PC-3 (cell line): ENCODE measurements at regions of chr11 and their contacts with region 1.

Region 1: DNA sequence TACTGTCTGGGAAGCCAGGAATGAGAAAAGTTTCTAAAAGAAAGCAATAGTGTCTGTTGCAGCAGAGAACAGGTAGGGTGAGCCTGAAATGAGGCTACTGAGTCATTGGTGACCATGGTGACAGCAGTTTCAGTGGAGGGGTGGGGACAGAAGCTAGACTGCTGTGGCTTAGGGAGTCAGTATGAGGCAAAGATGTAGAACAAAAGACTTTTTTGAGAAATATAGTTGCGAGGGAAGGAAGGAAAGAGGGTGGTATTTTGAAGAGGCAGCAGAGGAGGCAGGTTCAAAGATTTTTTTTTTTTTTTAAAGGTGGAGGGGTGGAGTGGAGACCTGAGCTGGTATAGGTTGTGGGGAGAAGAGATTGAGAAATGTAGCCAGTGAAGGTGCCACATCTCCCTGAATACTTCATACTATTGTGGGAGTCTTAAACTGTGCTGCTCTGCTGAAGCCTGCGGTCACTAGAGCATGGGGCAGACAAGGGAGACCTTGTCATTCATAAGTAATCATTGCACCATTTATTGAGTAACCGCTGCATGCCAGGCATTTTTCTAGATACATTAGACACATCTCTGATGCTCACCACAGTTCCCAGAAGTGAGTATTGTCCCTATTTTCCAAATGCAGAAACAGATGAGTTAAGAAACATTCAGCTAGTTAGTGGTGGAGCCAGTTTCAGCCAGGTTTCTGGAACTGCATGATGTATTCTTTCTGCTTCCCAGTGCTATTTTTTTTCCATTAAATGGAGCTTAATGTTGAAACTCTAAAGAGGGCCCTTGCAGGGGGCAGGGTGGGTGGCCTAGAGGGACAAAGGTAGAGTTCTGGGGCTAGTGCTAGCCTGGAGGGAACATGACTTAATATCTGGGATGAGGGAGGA is 49.9 kb downstream of the STIM1 start:
- DNase-seq: peak; percentile 91
- ATAC-seq: peak; percentile 91
- H3K4me3 ChIP-seq: peak overlapping the region; percentile 59
- H3K27ac ChIP-seq: peak overlapping the region; percentile 89
- H3K4me1 ChIP-seq: peaks cover 52% of the 10 kb centered on the region
- H3K27me3 ChIP-seq: no peaks in the 10 kb centered on the region
- CTCF ChIP-seq: no peak

Region 2: GRCh38 chr11:4064278-4064955 is 159.1 kb after region 1 on chr11:
- CTCF ChIA-PET with region 1: interaction called, 3 read pairs
- POLR2A ChIA-PET with region 1: no interaction called
- intact Hi-C with region 1: loop called (anchors 5 kb)
- DNase-seq: no peak
- ATAC-seq: no peak; the same call in 1 of the 2 replicates
- H3K4me3 ChIP-seq: no peak overlapping the region
- H3K27ac ChIP-seq: no peak overlapping the region
- H3K4me1 ChIP-seq: peaks cover 17% of the 10 kb centered on the region
- H3K27me3 ChIP-seq: no peaks in the 10 kb centered on the region
- CTCF ChIP-seq: no peak